GM12878 (cell line): ENCODE measurements at regions of chr6 and their contacts with region 1.

Region 1: DNA sequence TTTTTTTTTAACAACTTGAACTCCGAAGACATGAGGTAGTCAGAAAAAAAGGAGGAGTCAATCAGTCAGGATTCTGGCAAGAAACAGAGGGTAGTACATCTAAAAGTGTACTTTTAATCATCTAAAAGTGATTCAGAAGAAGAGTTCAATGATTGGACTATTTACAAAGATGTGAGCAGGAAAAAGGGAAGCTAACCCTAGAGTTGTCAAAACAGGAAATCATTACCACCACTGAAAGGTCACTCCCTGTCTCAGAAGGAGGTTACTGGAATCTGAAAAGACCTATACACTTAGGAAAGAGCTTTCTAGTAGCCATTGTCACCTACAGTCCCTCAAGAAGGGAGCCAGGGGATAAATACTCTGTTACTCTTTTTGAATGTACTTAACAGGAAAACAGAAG is 16.7 kb upstream of the LMBRD1 start:
- DNase-seq: no peak
- ATAC-seq: peak; percentile 42
- H3K4me3 ChIP-seq: no peak overlapping the region
- H3K27ac ChIP-seq: peak overlapping the region; percentile 38
- H3K4me1 ChIP-seq: peaks cover 41% of the 10 kb centered on the region
- H3K27me3 ChIP-seq: no peaks in the 10 kb centered on the region
- CTCF ChIP-seq: no peak
- EP300 ChIP-seq: peak in 1 of 2 experiments; percentile 61; a peak in 1 of 4 replicates
- POLR2A ChIP-seq: no peak
- RAD21 ChIP-seq: no peak

Region 2: DNA sequence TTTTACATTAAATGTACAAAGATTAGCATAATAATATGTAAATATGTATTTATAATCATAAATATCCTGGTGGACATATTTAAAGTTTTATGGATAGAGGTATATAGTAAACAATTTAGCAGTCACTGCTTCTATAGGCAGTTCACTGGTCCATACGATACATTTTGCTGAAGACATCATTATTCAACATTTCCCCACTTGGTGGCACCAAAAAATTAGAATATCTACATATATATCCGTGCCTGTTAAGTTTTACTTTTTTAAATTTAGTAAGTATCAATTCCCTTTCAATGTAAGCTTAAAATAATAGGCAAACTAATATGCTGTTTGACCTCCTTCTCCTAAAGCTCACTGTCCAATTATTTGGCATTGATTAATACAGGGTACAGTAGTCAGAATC is 80.9 kb before region 1 on chr6:
- CTCF ChIA-PET with region 1: interaction called, 5 read pairs
- POLR2A ChIA-PET with region 1: interaction called, 3 read pairs
- RAD21 ChIA-PET with region 1: interaction called, 4 read pairs
- SMC1A ChIA-PET with region 1: interaction called, 10 read pairs
- in situ Hi-C with region 1: no loop called
- intact Hi-C with region 1: no loop called
- DNase-seq: peak; percentile 11
- ATAC-seq: peak; percentile 90
- H3K4me3 ChIP-seq: no peak overlapping the region
- H3K27ac ChIP-seq: no peak overlapping the region
- H3K4me1 ChIP-seq: no peaks in the 10 kb centered on the region
- H3K27me3 ChIP-seq: no peaks in the 10 kb centered on the region
- CTCF ChIP-seq: peak; percentile 10 to 48 (median 29); a peak in 3 of 6 replicates
- EP300 ChIP-seq: no peak
- POLR2A ChIP-seq: no peak
- RAD21 ChIP-seq: peak; percentile 47

Region 3: GRCh38 chr6:69791065-69791471 is 22.4 kb before region 1 on chr6:
- CTCF ChIA-PET with region 1: interaction called, 71 read pairs
- POLR2A ChIA-PET with region 1: interaction called, 32 read pairs
- RAD21 ChIA-PET with region 1: interaction called, 43 read pairs
- SMC1A ChIA-PET with region 1: interaction called, 76 read pairs
- in situ Hi-C with region 1: no loop called
- intact Hi-C with region 1: loop called (anchors 2 kb)
- DNase-seq: no peak
- ATAC-seq: peak; percentile 59
- H3K4me3 ChIP-seq: peak overlapping the region; percentile 43
- H3K27ac ChIP-seq: peak overlapping the region; percentile 46; the same call in 1 of the 2 replicates
- H3K4me1 ChIP-seq: peaks cover 27% of the 10 kb centered on the region
- H3K27me3 ChIP-seq: no peaks in the 10 kb centered on the region
- CTCF ChIP-seq: no peak
- EP300 ChIP-seq: no peak
- POLR2A ChIP-seq: no peak
- RAD21 ChIP-seq: no peak

Region 4: GRCh38 chr6:69796642-69797390 is 16.7 kb before region 1 on chr6 and contains the start of gene LMBRD1:
- CTCF ChIA-PET with region 1: interaction called, 71 read pairs
- POLR2A ChIA-PET with region 1: interaction called, 32 read pairs
- RAD21 ChIA-PET with region 1: interaction called, 43 read pairs
- SMC1A ChIA-PET with region 1: interaction called, 76 read pairs
- in situ Hi-C with region 1: no loop called
- intact Hi-C with region 1: loop called (anchors 2 kb)
- DNase-seq: peak; percentile 91
- ATAC-seq: peak; percentile 91
- H3K4me3 ChIP-seq: peak within 1 kb of the TSS; percentile 80
- H3K27ac ChIP-seq: peak within 1 kb of the TSS; percentile 85
- H3K4me1 ChIP-seq: peaks cover 13% of the 10 kb centered on the region
- H3K27me3 ChIP-seq: no peaks in the 10 kb centered on the region
- CTCF ChIP-seq: peak; percentile 97 to 100 (median 99); a peak in 5 of 6 replicates
- EP300 ChIP-seq: 0 out of 4 replicates have a peak, but pooled peaks of 1 of the 2 experiments have one; percentile 5
- POLR2A ChIP-seq: peak; percentile 83
- RAD21 ChIP-seq: no peak
- polyA plus RNA-seq, gene LMBRD1: 43.2 to 82.1 TPM

Region 5: GRCh38 chr6:69843189-69843588 is 29.7 kb after region 1 on chr6:
- CTCF ChIA-PET with region 1: interaction called, 3 read pairs
- POLR2A ChIA-PET with region 1: no interaction called
- RAD21 ChIA-PET with region 1: interaction called, 3 read pairs
- SMC1A ChIA-PET with region 1: interaction called, 14 read pairs
- in situ Hi-C with region 1: no loop called
- intact Hi-C with region 1: no loop called
- DNase-seq: no peak
- ATAC-seq: peak; percentile 80
- H3K4me3 ChIP-seq: no peak overlapping the region
- H3K27ac ChIP-seq: no peak overlapping the region
- H3K4me1 ChIP-seq: no peaks in the 10 kb centered on the region
- H3K27me3 ChIP-seq: no peaks in the 10 kb centered on the region
- CTCF ChIP-seq: no peak
- EP300 ChIP-seq: peak; percentile 5 to 48; a peak in 1 of 4 replicates
- POLR2A ChIP-seq: no peak
- RAD21 ChIP-seq: no peak